Aorta (tissue), 5 donors: ENCODE measurements at regions of chr16 and their contacts with region 1.

Region 1: DNA sequence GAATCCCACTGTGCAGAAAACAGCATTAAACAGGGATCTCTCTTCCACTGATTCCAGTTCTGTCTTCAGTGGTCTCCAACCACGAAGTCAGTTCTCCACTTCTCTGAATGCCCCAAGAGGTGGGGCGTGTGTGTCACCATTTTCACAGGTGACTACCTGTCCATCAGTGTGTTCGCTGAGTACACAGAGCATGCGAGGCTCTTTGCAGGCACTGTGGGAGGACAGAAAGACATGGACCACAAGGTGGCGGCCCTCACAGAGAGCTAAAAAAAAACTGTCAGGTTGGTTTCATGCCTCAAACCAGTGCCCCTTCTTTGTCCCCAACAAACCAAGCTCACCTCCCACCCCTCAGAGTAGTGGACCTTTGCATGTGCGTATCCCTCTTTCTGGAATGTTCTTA is 13.8 kb downstream of the EMP2 start:
- DNase-seq: no peak
- ATAC-seq: no peak
- H3K4me3 ChIP-seq: no peak overlapping the region
- H3K27ac ChIP-seq: peak overlapping the region; percentile 53 to 89
- H3K4me1 ChIP-seq: peaks cover 2 to 4% of the 10 kb centered on the region in 2 donors
- H3K27me3 ChIP-seq: no peaks in the 10 kb centered on the region

Region 2: GRCh38 chr16:10683170-10683569 is 116.6 kb after region 1 on chr16:
- intact Hi-C with region 1: no loop called
- DNase-seq: peak in 1 of 2 donors; percentile 62
- ATAC-seq: no peak
- H3K4me3 ChIP-seq: no peak overlapping the region
- H3K27ac ChIP-seq: no peak overlapping the region
- H3K4me1 ChIP-seq: no peaks in the 10 kb centered on the region
- H3K27me3 ChIP-seq: no peaks in the 10 kb centered on the region

Region 3: GRCh38 chr16:11114366-11115164 is 548.0 kb after region 1 on chr16:
- intact Hi-C with region 1: loop called in 1 of 2 experiments (anchors 10 kb)
- DNase-seq: no peak
- ATAC-seq: no peak
- H3K4me3 ChIP-seq: no peak overlapping the region
- H3K27ac ChIP-seq: no peak overlapping the region
- H3K4me1 ChIP-seq: peaks cover 4 to 5% of the 10 kb centered on the region in 2 donors
- H3K27me3 ChIP-seq: no peaks in the 10 kb centered on the region